Psoas muscle (tissue), 8 donors: ENCODE measurements at regions of chr11 and their contacts with region 1.

Region 1: GRCh38 chr11:62841361-62842184 is 2.2 kb upstream of the WDR74 start:
- DNase-seq: peak; percentile 77 to 88
- ATAC-seq: peak; percentile 72 to 78 (median 78)
- H3K4me3 ChIP-seq: peak overlapping the region; percentile 84
- H3K27ac ChIP-seq: peak overlapping the region; percentile 100
- H3K4me1 ChIP-seq: peaks cover 12% of the 10 kb centered on the region
- H3K27me3 ChIP-seq: no peaks in the 10 kb centered on the region
- CTCF ChIP-seq: no peak

Region 2: DNA sequence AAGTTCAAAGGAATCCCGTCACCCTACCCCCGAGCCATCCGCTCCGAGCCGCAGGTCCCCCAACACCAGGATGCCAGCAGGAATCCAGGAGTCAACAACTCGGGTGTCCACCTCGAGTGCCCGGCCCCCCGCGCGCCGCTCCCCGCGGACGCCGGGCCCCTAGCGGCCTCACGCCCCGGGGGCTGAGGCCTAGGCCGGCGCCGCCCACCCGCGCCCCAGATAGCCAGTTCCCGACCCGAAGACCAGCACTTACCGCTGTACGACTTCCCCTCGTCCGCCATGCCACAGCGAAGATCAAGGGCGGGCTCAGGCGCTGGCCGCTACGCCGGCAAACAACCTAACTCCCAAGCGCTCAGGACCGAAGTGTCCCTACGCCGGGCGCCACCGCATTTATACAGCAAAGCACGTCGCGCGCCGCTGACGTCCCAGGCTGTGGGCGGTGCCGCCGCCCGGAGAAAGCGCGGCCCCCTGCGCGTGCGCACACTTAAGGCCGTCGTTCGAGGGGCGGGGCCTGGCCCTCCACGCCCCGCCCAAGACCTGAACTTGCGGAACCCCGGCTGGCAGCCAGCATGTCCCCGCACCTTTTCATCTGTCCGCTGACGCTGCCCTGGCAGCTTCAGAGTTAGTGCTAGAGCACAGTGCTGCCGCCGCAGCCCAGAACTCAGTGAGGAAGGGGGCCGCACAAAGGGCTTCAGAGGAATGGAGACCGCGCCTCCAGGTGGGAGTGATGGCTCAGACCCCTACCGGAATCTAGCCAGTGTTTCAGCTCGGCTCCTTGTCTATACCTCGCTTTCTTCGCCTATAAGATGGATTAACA is 36.3 kb before region 1 on chr11 and contains the start of gene NXF1:
- intact Hi-C with region 1: loop called in 1 of 2 experiments (anchors 5 kb)
- DNase-seq: peak; percentile 94 to 98
- ATAC-seq: peak; percentile 88 to 89 (median 88)
- H3K4me3 ChIP-seq: peak within 1 kb of the TSS; percentile 95
- H3K27ac ChIP-seq: peak within 1 kb of the TSS; percentile 96
- H3K4me1 ChIP-seq: peaks cover 22% of the 10 kb centered on the region
- H3K27me3 ChIP-seq: no peaks in the 10 kb centered on the region
- CTCF ChIP-seq: no peak
- total RNA-seq, gene NXF1: 38.3 to 45.4 (median 41.9) TPM

Region 3: GRCh38 chr11:62855571-62856332 is 14.2 kb after region 1 on chr11:
- intact Hi-C with region 1: loop called in 1 of 2 experiments (anchors 1 kb)
- DNase-seq: peak; percentile 96 to 98
- ATAC-seq: peak; percentile 97 to 99 (median 98)
- H3K4me3 ChIP-seq: peak overlapping the region; percentile 91
- H3K27ac ChIP-seq: peak overlapping the region; percentile 89
- H3K4me1 ChIP-seq: peaks cover 23% of the 10 kb centered on the region
- H3K27me3 ChIP-seq: no peaks in the 10 kb centered on the region
- CTCF ChIP-seq: no peak

Region 4: DNA sequence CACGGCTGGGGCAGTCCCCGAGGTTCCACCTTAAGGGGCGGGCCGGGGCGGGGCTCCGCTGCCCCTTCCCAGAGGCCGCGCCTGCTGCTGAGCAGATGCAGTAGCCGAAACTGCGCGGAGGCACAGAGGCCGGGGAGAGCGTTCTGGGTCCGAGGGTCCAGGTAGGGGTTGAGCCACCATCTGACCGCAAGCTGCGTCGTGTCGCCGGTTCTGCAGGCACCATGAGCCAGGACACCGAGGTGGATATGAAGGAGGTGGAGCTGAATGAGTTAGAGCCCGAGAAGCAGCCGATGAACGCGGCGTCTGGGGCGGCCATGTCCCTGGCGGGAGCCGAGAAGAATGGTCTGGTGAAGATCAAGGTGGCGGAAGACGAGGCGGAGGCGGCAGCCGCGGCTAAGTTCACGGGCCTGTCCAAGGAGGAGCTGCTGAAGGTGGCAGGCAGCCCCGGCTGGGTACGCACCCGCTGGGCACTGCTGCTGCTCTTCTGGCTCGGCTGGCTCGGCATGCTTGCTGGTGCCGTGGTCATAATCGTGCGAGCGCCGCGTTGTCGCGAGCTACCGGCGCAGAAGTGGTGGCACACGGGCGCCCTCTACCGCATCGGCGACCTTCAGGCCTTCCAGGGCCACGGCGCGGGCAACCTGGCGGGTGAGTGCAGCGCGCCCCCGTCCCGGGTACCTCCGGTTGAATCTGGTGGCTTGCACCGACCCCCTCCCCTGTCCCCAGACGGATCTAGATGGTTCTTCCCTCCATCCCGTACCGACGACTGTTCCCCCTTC is 39.4 kb after region 1 on chr11 and contains the start of gene SLC3A2:
- intact Hi-C with region 1: loop called in 1 of 2 experiments (anchors 2 kb)
- DNase-seq: peak; percentile 91 to 95
- ATAC-seq: peak; percentile 85 to 89 (median 88)
- H3K4me3 ChIP-seq: peak within 1 kb of the TSS; percentile 99
- H3K27ac ChIP-seq: peak within 1 kb of the TSS; percentile 100
- H3K4me1 ChIP-seq: peaks cover 41% of the 10 kb centered on the region
- H3K27me3 ChIP-seq: no peaks in the 10 kb centered on the region
- CTCF ChIP-seq: peak; percentile 59
- total RNA-seq, gene SLC3A2: 62.6 to 187 (median 132) TPM